HEK293 (cell line): ENCODE measurements at regions of chr6 and their contacts with region 1.

Region 1: DNA sequence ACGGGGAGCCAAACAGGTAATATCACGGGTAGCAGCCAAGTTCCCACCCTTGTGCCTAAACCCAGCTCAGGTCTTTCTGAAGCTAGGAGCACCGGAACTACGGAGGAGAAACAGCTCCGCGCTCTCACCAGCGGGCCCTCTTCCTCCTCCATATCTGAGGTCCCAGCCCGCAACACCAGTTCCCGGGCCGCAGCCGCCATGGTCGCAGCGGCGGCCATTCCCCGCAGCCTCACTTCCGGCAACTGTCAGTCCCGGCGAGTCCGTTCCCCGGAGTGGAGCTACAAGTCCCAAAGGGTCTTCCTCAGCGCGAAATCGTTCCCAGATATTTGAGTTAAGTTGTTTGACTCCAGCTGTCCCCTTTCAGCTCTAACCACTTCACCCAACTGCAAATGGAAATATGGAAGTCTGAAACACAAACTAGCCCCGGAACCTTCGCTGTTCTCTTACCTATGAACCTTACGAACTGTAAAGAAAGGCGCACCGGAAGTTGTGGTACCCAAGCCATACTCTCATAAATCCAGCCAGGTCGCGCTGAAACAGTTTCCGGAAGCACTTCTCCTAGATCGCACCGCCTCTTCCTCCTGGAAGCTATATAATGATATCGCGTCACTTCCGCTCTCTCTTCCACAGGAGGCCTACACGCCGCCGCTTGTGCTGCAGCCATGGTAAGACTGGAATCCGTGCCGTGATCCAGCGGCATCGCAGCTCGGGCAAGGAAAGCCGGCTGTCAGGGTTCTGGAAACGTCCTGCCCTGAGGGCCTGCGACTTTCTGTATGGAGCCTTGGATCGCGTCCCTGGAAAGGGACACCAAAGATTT is at the starts of genes RPS18 and VPS52:
- H3K4me3 ChIP-seq: peak within 1 kb of the TSS; percentile 77
- H3K27ac ChIP-seq: peak within 1 kb of the TSS; percentile 99
- H3K4me1 ChIP-seq: peaks cover 27% of the 10 kb centered on the region
- CTCF ChIP-seq: peak; percentile 49; the same call in 1 of the 2 replicates

Region 2: GRCh38 chr6:33254591-33254990 is 17.1 kb before region 1 on chr6:
- CTCF ChIA-PET with region 1: interaction called, 8 read pairs
- POLR2A ChIA-PET with region 1: interaction called, 65 read pairs
- H3K4me3 ChIP-seq: no peak overlapping the region
- H3K27ac ChIP-seq: peak overlapping the region; percentile 50; the same call in 1 of the 2 replicates
- H3K4me1 ChIP-seq: peaks cover 5% of the 10 kb centered on the region
- CTCF ChIP-seq: no peak

Region 3: GRCh38 chr6:33299237-33299944 is 27.7 kb after region 1 on chr6:
- CTCF ChIA-PET with region 1: interaction called, 12 read pairs
- POLR2A ChIA-PET with region 1: interaction called, 51 read pairs
- H3K4me3 ChIP-seq: peak overlapping the region; percentile 74
- H3K27ac ChIP-seq: peak overlapping the region; percentile 91
- H3K4me1 ChIP-seq: no peaks in the 10 kb centered on the region
- CTCF ChIP-seq: peak; percentile 90

Region 4: DNA sequence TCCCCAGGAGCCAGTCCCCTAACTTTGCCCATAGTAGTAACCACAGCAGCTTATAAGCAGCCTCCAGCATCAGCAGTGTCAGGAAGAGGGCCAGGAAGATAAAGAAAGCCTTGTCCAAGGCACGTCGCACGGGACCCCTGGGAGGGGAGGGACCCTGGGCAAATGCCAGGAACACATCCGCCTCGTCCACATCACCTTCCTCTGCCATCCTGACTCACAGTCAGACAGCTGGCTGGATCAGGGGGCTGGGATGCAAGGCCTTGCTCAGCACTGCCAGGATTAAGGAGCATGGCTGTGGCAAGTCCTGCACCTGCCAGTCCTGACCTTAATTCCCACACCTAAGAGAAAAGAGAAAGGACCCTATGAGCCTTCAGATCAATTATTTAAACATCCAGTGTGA is 57.4 kb after region 1 on chr6:
- CTCF ChIA-PET with region 1: no interaction called
- POLR2A ChIA-PET with region 1: no interaction called
- H3K4me3 ChIP-seq: no peak overlapping the region
- H3K27ac ChIP-seq: no peak overlapping the region
- H3K4me1 ChIP-seq: no peaks in the 10 kb centered on the region
- CTCF ChIP-seq: no peak

Region 5: DNA sequence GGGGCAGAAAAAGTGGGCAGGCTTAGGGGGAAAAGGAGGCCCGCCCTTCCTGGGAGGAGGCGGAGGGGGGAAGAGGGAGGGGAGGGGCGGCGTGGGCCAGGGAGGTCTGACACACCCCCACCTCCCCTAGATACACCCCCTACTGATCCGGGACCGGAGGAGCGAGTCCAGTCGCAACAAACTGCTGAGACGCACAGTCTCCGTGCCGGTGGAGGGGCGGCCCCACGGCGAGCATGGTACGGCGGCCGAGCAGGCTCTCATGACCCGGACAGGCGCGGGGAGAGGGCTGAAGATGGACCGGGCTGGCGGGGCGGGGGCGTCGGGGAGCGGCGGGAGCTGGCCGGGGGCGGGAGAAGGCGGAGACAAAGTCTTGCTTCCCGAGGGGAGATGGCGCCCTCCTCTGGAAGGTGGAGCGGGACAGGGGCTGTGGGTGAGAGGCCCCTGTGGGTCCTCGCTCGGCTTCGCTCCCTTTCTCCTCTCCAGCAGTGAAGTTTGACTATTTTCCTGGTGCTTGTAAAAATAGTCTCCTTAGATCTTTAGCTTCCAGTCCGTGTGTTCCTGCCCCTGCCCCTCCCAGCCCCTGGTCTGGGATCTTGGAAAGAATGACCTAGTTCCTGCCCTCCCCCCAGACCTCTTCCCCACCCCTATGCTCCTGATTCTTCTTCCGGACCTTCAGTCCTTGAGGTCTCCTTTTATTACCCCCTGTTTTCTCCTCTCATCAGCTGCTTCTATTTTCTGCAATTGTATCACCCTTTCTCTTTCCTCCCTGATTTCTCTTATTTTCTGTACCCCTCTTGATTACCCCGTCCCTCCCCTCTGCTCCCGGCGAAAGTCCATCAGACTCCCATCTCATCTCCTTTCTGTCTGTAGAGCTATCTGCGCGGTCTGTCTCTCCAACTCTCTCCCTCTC is 154.3 kb after region 1 on chr6:
- CTCF ChIA-PET with region 1: interaction called, 14 read pairs
- POLR2A ChIA-PET with region 1: interaction called, 18 read pairs
- H3K4me3 ChIP-seq: peak overlapping the region; percentile 69
- H3K27ac ChIP-seq: peak overlapping the region; percentile 80
- H3K4me1 ChIP-seq: peaks cover 7% of the 10 kb centered on the region
- CTCF ChIP-seq: peak; percentile 44

Region 6: DNA sequence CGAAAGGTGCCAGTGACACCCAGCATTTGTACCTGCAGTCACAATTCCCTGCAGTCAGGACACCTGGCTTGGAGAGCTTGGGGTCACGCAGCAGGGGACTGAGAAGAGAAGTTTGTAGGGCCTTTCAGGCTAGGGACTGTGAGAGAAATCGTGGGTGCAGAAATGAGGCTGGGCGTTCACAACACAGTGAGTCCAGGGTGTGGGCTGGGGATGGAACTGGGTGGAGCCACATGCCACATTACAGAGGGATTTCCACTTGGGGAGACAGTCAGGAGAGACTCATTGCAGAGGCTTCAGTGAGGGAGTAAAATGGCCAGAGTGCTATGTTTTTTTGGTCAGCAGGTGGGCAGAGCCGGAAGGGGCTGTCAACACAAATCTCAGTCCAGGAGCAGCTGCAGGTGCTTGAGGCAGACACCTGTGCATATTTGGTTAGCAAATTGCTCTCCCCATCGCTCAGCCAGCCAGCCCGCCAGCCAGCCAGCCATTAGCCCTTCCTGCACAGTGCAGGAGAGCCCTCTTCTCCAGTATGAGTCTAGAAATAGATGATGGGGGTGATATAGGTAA is 356.8 kb after region 1 on chr6:
- CTCF ChIA-PET with region 1: no interaction called
- POLR2A ChIA-PET with region 1: no interaction called
- H3K4me3 ChIP-seq: no peak overlapping the region
- H3K27ac ChIP-seq: no peak overlapping the region
- H3K4me1 ChIP-seq: no peaks in the 10 kb centered on the region
- CTCF ChIP-seq: no peak